Activated CD4-positive, alpha-beta memory T cell treated with anti-CD3 and anti-CD28 coated beads for 36 hours (primary cell): ENCODE measurements at regions of chr9 and their contacts with region 1.

Region 1: DNA sequence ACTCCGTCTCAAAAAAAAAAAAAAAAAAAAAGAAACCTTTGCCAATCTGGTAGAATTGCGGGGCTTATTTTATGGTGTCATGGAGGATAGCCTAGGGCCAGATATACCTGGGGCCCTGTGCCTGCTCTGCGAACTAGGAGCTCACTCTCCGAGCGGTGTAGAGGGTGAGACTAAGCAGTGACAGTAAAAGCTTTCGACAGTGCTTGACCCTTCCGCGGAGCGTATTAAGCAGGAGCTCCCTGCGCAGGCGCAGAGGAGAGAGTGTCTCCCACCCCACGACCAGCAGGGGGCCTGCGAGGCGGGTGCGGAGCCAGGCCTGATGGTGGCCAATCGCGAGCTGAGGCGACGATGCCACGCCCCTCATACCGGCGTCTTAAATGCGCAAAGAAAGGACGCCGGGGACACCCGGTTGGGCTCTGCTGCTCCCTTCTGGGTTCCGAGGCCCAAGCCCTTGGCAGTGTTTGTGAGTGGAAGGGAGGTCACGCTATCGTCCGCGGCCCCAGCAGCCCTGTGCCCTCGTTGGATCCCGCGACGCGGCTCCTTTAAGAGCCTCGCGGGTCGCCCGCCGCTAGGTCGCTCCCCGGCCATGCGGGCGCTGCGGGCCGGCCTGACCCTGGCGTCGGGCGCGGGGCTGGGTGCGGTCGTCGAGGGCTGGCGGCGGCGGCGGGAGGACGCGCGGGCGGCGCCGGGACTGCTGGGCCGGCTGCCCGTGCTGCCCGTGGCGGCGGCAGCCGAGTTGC is at the start of gene ENDOG:
- DNase-seq: peak; percentile 99
- H3K4me3 Mint-ChIP-seq: peak within 1 kb of the TSS; percentile 77
- H3K27ac Mint-ChIP-seq: peak within 1 kb of the TSS; percentile 23
- H3K4me1 Mint-ChIP-seq: peaks cover 17% of the 10 kb centered on the region
- H3K27me3 Mint-ChIP-seq: no peaks in the 10 kb centered on the region
- total RNA-seq, gene ENDOG: 13.8 to 14.2 TPM

Region 2: GRCh38 chr9:128552153-128552743 is 266.0 kb before region 1 on chr9 and contains the start of gene SPTAN1:
- CTCF ChIA-PET with region 1: interaction called, 10 read pairs
- POLR2A ChIA-PET with region 1: interaction called, 3 read pairs
- intact Hi-C with region 1: no loop called
- DNase-seq: peak; percentile 97
- H3K4me3 Mint-ChIP-seq: peak within 1 kb of the TSS; percentile 96
- H3K27ac Mint-ChIP-seq: peak within 1 kb of the TSS; percentile 95
- H3K4me1 Mint-ChIP-seq: peaks cover 32% of the 10 kb centered on the region
- H3K27me3 Mint-ChIP-seq: no peaks in the 10 kb centered on the region
- total RNA-seq, gene SPTAN1: 228 TPM

Region 3: DNA sequence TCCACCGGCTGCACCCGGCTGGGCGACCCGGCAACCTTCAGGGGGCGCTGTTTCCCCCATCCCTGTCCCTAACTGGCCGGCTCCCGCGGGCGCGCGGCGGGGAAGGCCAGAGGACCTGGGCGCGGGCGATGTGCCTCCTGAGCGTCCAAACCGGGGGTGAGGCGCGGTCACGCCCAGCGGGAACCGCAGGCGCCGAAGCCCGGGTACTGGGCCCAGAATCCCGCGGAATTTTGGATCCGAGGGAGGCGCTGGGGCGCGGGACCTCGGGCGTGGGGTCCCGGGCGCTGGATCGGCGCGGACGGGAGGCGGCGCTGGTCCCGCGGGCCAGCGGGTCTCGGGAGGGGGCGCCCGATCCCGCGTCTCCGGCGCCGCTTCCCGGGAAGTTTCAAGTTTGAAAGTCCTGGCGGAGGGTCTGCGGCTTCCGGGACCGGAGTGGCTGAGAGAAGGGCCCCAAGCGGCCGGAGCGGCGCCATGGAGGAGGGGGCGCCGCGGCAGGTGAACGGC is 115.8 kb before region 1 on chr9 and contains the start of gene PKN3:
- CTCF ChIA-PET with region 1: interaction called, 11 read pairs
- POLR2A ChIA-PET with region 1: no interaction called
- intact Hi-C with region 1: loop called (anchors 5 kb)
- DNase-seq: peak; percentile 91
- H3K4me3 Mint-ChIP-seq: peak within 1 kb of the TSS; percentile 73
- H3K27ac Mint-ChIP-seq: peak within 1 kb of the TSS; percentile 50
- H3K4me1 Mint-ChIP-seq: peaks cover 12% of the 10 kb centered on the region
- H3K27me3 Mint-ChIP-seq: no peaks in the 10 kb centered on the region
- total RNA-seq, gene PKN3: 10.4 to 11.4 TPM

Region 4: DNA sequence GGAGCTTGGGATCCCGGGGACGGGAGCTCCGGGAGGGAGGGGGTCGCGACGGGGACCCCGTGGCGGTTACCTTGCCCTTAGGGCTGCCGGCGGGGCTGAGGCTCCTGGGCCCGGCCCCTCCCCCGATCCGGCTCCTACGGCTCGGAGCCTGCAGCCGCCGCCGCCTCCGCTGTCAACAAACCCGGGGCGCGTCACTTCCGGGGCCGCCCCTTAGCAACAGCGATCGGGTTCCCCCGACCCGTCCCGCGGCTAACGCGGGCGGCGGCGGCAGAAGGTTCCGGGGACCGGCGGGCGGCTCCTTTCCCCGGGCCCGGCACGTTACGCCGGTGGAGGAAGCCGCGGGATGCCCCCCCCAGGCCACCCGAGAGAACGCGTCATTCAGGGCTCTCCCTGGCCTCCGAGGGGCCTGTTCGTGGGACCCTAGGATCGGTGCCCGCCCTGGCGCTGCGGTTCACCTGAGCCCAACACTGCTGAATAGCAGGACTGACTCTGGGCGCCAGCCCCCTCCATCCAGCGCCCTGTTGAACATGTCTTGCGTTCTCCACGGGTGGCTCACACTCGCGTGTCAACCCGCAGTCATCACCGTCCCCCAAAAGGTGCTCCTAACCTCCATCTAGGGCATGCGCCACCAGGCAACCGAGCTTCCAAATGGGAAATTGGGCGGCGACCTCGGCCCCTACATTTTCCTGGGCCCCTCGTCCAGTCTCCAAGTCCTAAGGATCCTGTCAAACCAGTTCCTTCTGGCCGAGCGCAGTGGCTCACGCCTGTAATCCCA is 46.3 kb before region 1 on chr9 and contains the start of gene ZER1:
- CTCF ChIA-PET with region 1: interaction called, 13 read pairs
- POLR2A ChIA-PET with region 1: interaction called, 4 read pairs
- intact Hi-C with region 1: loop called (anchors 2 kb)
- DNase-seq: peak; percentile 95
- H3K4me3 Mint-ChIP-seq: peak within 1 kb of the TSS; percentile 94
- H3K27ac Mint-ChIP-seq: peak within 1 kb of the TSS; percentile 82
- H3K4me1 Mint-ChIP-seq: peaks cover 17% of the 10 kb centered on the region
- H3K27me3 Mint-ChIP-seq: no peaks in the 10 kb centered on the region
- total RNA-seq, gene ZER1: 16.2 to 18.0 TPM

Region 5: GRCh38 chr9:128786681-128787601 is 31.3 kb before region 1 on chr9 and contains the start of gene TBC1D13:
- CTCF ChIA-PET with region 1: interaction called, 12 read pairs
- POLR2A ChIA-PET with region 1: interaction called, 3 read pairs
- intact Hi-C with region 1: no loop called
- DNase-seq: peak; percentile 94
- H3K4me3 Mint-ChIP-seq: peak within 1 kb of the TSS; percentile 80
- H3K27ac Mint-ChIP-seq: peak within 1 kb of the TSS; percentile 57
- H3K4me1 Mint-ChIP-seq: peaks cover 13% of the 10 kb centered on the region
- H3K27me3 Mint-ChIP-seq: no peaks in the 10 kb centered on the region
- total RNA-seq, gene TBC1D13: 14.6 to 14.9 TPM

Region 6: DNA sequence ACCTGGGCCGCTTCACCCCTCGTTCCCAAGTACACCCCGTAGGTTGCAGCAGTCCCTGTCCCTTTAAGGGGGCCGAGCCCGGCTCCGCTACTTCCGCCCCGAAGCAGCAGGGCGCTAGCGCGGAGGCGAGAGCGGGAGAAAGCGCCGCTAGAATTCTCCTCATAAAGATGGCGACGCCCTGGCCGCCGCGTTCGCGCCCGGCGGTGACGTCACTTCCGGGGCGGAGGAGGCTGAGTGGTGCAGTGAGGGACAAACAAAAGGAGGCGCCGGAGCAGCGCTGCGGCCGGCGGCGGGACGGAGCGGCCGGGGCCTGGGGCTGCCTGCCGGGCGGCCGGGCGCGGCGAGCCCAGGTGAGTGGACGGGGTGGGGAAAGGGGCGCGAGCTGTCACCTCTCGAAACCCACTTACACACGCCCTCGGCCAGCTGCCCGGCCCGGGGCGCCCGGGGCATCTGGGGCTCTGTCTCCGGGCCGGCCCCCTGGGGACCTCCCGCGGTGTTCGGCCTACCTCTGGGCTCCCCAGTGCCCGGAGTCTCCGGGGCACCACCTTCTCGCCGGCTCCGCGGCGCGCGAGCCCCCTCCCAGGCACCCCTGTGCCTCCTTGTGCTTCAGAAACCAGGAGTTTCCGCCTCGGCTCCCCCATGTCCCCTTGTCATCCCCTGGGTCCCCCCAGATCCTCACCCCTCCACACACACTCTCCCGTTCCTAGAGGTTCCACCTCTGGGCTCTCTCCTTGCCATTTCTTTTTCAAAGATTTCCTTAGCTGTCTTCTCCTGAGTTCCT is 63.8 kb after region 1 on chr9 and contains the starts of genes KYAT1 and LRRC8A:
- CTCF ChIA-PET with region 1: interaction called, 19 read pairs
- POLR2A ChIA-PET with region 1: no interaction called
- intact Hi-C with region 1: no loop called
- DNase-seq: peak; percentile 99
- H3K4me3 Mint-ChIP-seq: peak within 1 kb of the TSS; percentile 95
- H3K27ac Mint-ChIP-seq: peak within 1 kb of the TSS; percentile 89
- H3K4me1 Mint-ChIP-seq: peaks cover 50% of the 10 kb centered on the region
- H3K27me3 Mint-ChIP-seq: no peaks in the 10 kb centered on the region
- total RNA-seq, gene KYAT1: 15.9 to 18.1 TPM
- total RNA-seq, gene LRRC8A: 18.0 to 18.7 TPM

Region 7: GRCh38 chr9:128947422-128948301 is 129.4 kb after region 1 on chr9 and contains the starts of genes DOLK and NUP188:
- CTCF ChIA-PET with region 1: interaction called, 4 read pairs
- POLR2A ChIA-PET with region 1: interaction called, 5 read pairs
- intact Hi-C with region 1: loop called (anchors 5 kb)
- DNase-seq: peak; percentile 98
- H3K4me3 Mint-ChIP-seq: peak within 1 kb of the TSS; percentile 98
- H3K27ac Mint-ChIP-seq: peak within 1 kb of the TSS; percentile 98
- H3K4me1 Mint-ChIP-seq: peaks cover 27% of the 10 kb centered on the region
- H3K27me3 Mint-ChIP-seq: no peaks in the 10 kb centered on the region
- total RNA-seq, gene DOLK: 5.7 to 6.7 TPM
- total RNA-seq, gene NUP188: 121 to 124 TPM

Region 8: DNA sequence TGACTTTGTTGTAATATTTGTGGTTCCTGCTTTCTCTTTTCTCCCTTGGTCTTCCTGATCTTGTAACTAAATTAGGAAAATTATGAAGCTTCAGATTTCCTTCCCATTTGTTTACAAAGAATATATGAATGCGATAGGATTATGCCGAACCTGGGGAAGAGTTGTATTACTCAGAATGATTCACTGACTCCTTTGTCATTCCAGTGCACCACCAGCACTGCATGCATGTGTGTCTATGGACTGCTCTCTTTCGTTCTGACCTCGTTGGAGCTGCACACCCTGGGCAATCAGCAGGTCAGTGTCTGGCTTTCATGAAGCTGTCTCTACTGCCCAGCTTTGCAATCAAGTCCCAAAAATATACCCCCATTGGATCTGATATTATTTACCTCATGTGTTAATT is 154.7 kb after region 1 on chr9:
- CTCF ChIA-PET with region 1: no interaction called
- POLR2A ChIA-PET with region 1: no interaction called
- intact Hi-C with region 1: no loop called
- DNase-seq: no peak
- H3K4me3 Mint-ChIP-seq: no peak overlapping the region
- H3K27ac Mint-ChIP-seq: no peak overlapping the region
- H3K4me1 Mint-ChIP-seq: no peaks in the 10 kb centered on the region
- H3K27me3 Mint-ChIP-seq: no peaks in the 10 kb centered on the region

Region 9: DNA sequence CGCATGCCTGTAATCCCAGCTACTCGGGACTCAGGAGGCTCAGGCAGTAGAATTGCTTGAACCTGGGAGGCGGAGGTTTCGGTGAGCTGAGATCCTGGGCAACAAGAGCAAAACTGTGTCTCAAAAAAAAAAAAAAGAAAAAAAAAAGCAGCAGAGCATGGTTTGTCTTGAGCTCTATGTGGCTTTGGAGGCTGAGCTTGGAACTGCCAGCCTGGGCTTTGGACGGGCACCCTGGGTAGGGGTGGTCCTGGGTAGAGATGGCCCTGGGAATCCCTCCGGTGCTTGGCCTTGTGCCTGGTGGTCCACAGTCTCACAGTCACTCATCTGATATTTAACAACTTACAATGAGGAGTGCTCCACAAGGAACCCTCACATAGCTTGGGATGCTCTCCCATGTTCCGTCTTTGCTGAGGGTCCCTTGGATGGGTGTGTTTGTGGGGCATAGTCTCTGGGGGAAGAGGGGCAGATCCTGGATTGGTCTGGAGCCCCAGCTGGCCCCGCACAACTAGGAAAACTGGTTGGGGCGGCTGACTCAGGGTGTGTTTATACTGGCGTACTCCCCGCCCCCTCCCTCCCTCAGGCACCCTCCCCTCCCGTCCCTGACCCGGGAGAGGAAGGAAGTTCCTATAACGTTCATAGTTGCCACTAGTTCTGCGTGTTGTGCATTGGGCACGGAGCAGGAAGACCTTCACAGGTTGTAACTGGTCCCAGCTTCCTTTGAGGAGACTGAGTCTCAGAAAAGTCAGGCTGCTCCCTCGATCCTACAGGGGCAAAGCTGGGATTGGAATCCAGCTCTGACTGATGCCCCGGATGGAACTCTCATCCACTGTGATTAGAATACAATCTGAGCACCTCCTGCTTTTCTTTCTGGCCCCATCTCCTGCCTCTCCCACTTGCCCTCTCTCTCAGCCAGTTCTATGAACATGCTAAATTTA is 348.6 kb after region 1 on chr9:
- CTCF ChIA-PET with region 1: no interaction called
- POLR2A ChIA-PET with region 1: no interaction called
- intact Hi-C with region 1: no loop called
- DNase-seq: peak; percentile 48
- H3K4me3 Mint-ChIP-seq: peak overlapping the region; percentile 23
- H3K27ac Mint-ChIP-seq: no peak overlapping the region
- H3K4me1 Mint-ChIP-seq: peaks cover 20% of the 10 kb centered on the region
- H3K27me3 Mint-ChIP-seq: no peaks in the 10 kb centered on the region